OCI-LY7 (cell line): ENCODE measurements at regions of chr18 and their contacts with region 1.

Region 1: GRCh38 chr18:25896178-25896780 is 194.1 kb downstream of the SS18 start:
- DNase-seq: peak; percentile 70
- H3K4me3 ChIP-seq: no peak overlapping the region
- H3K27ac ChIP-seq: no peak overlapping the region
- H3K4me1 ChIP-seq: no peaks in the 10 kb centered on the region
- CTCF ChIP-seq: peak; percentile 94

Region 2: DNA sequence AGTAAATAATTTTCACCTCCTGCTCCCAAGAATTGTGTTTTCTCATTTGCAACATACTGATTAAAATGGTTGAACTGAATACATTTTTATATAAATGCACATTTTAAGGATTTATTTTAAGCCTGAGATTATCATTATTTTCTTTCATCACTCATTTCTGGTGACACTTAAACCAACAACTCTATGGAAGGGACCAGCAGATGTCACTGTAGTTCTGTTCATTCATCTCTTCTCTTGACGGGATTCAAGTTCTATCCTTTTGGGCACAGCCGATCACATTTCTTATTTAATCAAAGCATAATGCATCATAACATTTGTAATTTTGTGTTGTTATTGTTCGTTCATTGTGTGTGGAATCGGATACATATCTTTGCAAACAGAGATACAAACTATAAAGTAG is 1018.0 kb before region 1 on chr18:
- CTCF ChIA-PET with region 1: no interaction called
- POLR2A ChIA-PET with region 1: no interaction called
- intact Hi-C with region 1: loop called (anchors 10 kb)
- DNase-seq: peak; percentile 61
- H3K4me3 ChIP-seq: no peak overlapping the region
- H3K27ac ChIP-seq: no peak overlapping the region
- H3K4me1 ChIP-seq: no peaks in the 10 kb centered on the region
- CTCF ChIP-seq: peak; percentile 92

Region 3: GRCh38 chr18:25669741-25670140 is 226.5 kb before region 1 on chr18:
- CTCF ChIA-PET with region 1: no interaction called
- POLR2A ChIA-PET with region 1: no interaction called
- intact Hi-C with region 1: loop called (anchors 10 kb)
- DNase-seq: no peak
- H3K4me3 ChIP-seq: no peak overlapping the region
- H3K27ac ChIP-seq: no peak overlapping the region
- H3K4me1 ChIP-seq: no peaks in the 10 kb centered on the region
- CTCF ChIP-seq: peak; percentile 54

Region 4: DNA sequence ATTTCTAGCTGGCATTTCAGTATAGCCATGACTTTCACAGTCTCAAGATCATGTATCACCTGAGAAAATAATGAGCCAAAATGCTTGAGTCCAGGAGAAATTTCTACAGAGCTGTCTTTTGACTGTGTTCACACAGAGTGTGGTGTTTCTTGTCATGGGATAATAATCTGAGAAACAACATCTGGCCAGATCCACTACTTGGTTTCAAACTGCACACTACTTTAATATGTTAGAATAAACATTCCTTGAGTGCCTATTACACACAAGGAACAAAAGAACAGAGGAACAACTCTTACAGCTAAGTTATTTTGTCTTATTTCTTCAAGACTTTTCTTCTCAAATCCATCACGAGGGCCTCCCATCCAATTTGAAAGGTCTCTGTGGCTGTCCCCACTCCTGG is 85.9 kb after region 1 on chr18:
- CTCF ChIA-PET with region 1: no interaction called
- POLR2A ChIA-PET with region 1: no interaction called
- intact Hi-C with region 1: no loop called
- DNase-seq: no peak
- H3K4me3 ChIP-seq: no peak overlapping the region
- H3K27ac ChIP-seq: no peak overlapping the region
- H3K4me1 ChIP-seq: no peaks in the 10 kb centered on the region
- CTCF ChIP-seq: no peak